Lower leg skin (tissue), 4 donors: ENCODE measurements at regions of chr9 and their contacts with region 1.

Region 1: GRCh38 chr9:118701985-118702384 is 667.2 kb downstream of the BRINP1 start:
- DNase-seq: no peak
- H3K4me3 ChIP-seq: no peak overlapping the region
- CTCF ChIP-seq: no peak
- POLR2A ChIP-seq: no peak

Region 2: DNA sequence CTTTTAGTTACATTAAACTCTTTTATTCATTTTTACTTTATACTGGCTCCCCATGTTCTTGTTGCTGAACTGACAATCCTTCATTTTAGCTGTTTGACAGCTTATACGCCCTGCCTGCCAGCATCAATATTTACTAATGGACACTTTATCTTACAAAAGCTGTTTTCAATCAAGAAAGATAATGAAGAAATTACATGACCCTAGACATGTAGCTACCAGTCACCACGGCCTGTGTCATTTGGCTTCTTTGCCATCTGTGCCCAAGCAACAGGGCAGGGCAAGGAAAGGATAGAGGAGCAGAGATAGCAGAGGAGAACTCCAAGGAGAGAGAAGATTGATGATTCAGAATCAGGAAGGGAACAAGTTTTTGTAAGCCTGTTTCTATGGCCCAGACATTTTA is 19.9 kb after region 1 on chr9:
- intact Hi-C with region 1: loop called (anchors 1 kb)
- DNase-seq: no peak
- H3K4me3 ChIP-seq: no peak overlapping the region
- CTCF ChIP-seq: no peak
- POLR2A ChIP-seq: no peak

Region 3: DNA sequence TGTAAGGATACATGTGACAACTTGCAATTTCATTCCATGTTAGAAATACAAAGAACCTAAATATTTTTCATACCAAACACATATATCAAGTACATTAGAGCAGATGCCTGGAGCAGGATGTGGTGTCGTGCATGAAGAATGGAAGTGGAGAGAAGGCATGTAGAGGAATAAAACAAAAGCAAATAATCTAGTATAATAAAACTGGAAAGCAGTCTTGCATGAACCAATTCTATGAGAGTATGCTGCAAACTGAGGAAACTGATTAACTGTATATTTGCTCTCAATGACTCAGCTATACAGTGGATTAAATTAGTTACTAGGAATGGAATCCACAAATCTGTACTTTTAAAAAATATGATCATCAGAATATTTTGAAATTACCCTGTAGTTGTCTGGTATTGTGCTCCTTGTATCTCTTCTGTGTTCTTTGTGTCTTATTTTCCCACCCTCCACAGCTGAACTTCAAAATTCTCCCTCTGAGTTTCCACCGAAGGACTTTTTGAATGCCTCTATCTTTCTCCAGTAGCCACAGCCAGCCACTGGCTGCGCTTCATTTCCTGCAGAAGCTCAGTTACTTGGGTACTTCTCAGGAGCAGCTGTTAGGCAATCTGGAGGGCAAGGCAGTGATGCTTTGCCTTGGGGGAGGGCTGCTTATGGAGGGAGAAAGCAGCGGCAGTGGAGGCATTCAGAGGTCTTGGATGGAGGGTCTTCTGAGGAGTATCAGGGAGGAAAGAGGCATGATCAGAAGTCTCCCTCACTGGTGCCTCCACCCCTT is 59.2 kb after region 1 on chr9:
- intact Hi-C with region 1: no loop called
- DNase-seq: no peak
- H3K4me3 ChIP-seq: no peak overlapping the region
- CTCF ChIP-seq: no peak
- POLR2A ChIP-seq: no peak